Endothelial cell of umbilical vein (primary cell): ENCODE measurements at regions of chr1 and their contacts with region 1.

Region 1: DNA sequence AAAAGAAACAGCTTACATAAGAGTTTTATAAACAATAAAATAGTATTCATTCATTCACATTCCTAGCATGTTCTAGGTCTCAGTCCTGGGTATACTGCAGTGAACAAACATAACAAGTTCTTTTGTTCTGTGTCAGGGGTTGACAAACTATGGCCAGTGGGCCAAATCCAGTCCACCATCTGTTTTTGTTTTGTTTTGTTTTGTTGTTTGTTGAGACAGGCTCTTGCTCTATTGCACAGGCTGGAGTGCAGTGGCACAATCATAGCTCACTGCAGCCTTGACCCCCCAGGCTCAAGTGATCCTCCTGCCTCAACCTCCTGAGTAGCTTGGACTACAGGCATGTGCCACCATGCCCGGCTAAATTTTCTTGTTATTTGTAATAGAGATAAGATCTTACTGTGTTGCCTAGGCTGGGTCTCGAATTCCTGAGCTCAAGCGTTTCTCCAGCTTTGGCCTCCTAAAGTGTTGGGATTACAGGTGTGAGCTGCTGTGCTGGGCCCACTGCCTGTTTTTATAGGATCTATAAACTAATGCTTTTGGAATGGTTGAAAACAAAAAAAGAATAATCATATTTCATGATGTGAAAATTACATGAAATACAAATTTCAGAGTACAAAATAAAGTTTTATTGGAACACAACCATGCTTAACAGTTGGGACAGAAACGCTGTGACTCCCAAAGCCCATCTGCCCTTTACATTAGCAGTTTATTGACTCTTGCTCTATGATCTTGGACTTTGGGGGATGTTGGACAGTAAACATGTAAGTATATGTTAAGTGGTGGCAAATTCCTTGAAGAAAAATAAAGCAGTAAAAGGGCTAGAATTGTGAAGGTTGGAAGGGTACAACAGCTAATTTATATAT is 17.9 kb downstream of the CAPZA1 start:
- DNase-seq: no peak
- H3K4me3 ChIP-seq: no peak overlapping the region
- H3K27ac ChIP-seq: peak overlapping the region; percentile 66
- H3K4me1 ChIP-seq: peaks cover 26% of the 10 kb centered on the region
- H3K27me3 ChIP-seq: no peaks in the 10 kb centered on the region
- CTCF ChIP-seq: no peak
- POLR2A ChIP-seq: no peak

Region 2: GRCh38 chr1:112706908-112707663 is 69.6 kb after region 1 on chr1 and contains the start of gene RHOC:
- CTCF ChIA-PET with region 1: no interaction called
- POLR2A ChIA-PET with region 1: no interaction called
- dilution Hi-C with region 1: no loop called
- intact Hi-C with region 1: loop called (anchors 5 kb)
- DNase-seq: peak; percentile 88
- H3K4me3 ChIP-seq: peak within 1 kb of the TSS; percentile 81 to 90 (median 89)
- H3K27ac ChIP-seq: peak within 1 kb of the TSS; percentile 88
- H3K4me1 ChIP-seq: peaks cover 40% of the 10 kb centered on the region
- H3K27me3 ChIP-seq: no peaks in the 10 kb centered on the region
- CTCF ChIP-seq: peak; percentile 97 to 98
- POLR2A ChIP-seq: peak; percentile 83
- total RNA-seq, gene RHOC: 652 and 699 TPM in 2 replicates